Heart left ventricle (tissue), 16 donors: ENCODE measurements at regions of chr18 and their contacts with region 1.

Region 1: GRCh38 chr18:24262087-24262486 is 123.2 kb downstream of the CABYR start:
- DNase-seq: no peak
- ATAC-seq: peak in 3 of 4 donors; percentile 57 to 77 (median 61)
- H3K4me3 ChIP-seq: no peak overlapping the region
- H3K27ac ChIP-seq: peak overlapping the region in 7 of 12 donors; percentile 6 to 66 (median 35)
- H3K4me1 ChIP-seq: peaks cover 0 to 46% (median 19%) of the 10 kb centered on the region in 12 donors
- H3K27me3 ChIP-seq: no peaks in the 10 kb centered on the region
- CTCF ChIP-seq: no peak
- POLR2A ChIP-seq: no peak

Region 2: DNA sequence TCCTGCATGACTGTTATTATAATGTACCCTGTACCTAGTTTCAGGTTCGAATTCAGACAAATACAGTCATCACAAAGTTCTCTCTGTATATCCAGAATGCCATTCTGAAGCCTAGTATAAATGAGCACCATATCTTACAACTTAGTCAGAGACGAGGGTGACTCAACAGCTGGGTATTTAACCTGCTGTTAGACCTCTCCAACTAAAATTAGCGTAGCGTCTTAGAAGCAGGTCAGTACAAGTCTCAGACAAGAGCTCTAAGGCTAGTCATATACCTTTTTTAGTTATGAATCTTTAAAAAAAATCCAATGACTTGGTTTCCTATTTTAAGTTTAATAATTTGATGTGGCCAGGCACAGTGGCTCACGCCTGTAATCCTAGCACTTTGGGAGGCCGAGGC is 49.1 kb before region 1 on chr18:
- intact Hi-C with region 1: loop called in 1 of 10 experiments (anchors 10 kb)
- DNase-seq: no peak
- ATAC-seq: peak; percentile 41 to 87 (median 74)
- H3K4me3 ChIP-seq: no peak overlapping the region
- H3K27ac ChIP-seq: peak overlapping the region in 3 of 12 donors; percentile 11 to 48 (median 45)
- H3K4me1 ChIP-seq: peaks cover 0 to 43% (median 32%) of the 10 kb centered on the region in 12 donors
- H3K27me3 ChIP-seq: no peaks in the 10 kb centered on the region
- CTCF ChIP-seq: no peak
- POLR2A ChIP-seq: no peak

Region 3: DNA sequence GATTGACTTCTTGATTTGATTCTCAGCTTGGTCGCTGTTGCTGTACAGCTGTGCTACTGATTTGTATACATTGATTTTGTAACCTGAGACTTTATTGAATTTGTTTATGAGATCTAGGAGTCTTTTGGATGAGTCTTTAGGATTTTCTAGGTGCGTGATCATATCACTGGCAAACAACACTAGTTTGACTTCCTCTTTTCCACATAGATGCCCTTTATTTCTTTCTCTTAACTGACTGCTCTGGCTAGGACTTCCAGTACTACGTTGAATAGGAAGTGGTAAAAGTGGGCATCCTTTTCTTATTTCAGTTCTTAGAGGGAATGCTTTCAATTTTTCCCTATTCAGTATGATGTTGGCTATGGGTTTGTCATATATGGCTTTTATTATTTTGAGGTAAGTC is 34.2 kb after region 1 on chr18:
- intact Hi-C with region 1: no loop called
- DNase-seq: no peak
- ATAC-seq: no peak
- H3K4me3 ChIP-seq: no peak overlapping the region
- H3K27ac ChIP-seq: no peak overlapping the region
- H3K4me1 ChIP-seq: no peaks in the 10 kb centered on the region
- H3K27me3 ChIP-seq: no peaks in the 10 kb centered on the region
- CTCF ChIP-seq: no peak
- POLR2A ChIP-seq: no peak